ENCODE measurements at regions of chr12 and their contacts with region 1.

Region 1: GRCh38 chr12:21677622-21678277 is 20.1 kb upstream of the LDHB start:
- DNase-seq: no peak
- H3K4me3 ChIP-seq: no peak overlapping the region
- H3K27ac ChIP-seq: no peak overlapping the region
- H3K27me3 ChIP-seq: peaks cover 7% of the 10 kb centered on the region
- CTCF ChIP-seq: no peak

Region 2: DNA sequence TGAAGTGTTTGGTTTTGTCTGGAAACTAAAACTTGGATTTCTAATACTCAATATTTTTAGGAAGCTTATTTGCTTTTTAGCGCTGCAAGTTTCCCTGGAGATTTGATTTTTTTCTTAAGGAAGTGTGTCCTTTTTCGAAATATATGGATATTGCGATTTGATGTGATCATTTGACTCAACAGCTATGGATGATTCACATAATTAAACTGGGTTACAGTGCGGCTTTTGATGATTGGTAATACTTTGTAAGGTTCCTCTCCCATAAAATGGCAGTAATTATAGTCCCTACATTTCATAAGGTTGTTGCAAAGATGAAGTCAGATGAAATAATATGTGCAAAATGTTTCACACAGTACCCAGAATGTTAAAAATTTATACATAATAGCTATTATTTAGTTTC is 33.2 kb before region 1 on chr12:
- CTCF ChIA-PET with region 1: interaction called, 12 read pairs
- POLR2A ChIA-PET with region 1: no interaction called
- DNase-seq: no peak
- H3K4me3 ChIP-seq: no peak overlapping the region
- H3K27ac ChIP-seq: no peak overlapping the region
- H3K27me3 ChIP-seq: no peaks in the 10 kb centered on the region
- CTCF ChIP-seq: no peak

Region 3: DNA sequence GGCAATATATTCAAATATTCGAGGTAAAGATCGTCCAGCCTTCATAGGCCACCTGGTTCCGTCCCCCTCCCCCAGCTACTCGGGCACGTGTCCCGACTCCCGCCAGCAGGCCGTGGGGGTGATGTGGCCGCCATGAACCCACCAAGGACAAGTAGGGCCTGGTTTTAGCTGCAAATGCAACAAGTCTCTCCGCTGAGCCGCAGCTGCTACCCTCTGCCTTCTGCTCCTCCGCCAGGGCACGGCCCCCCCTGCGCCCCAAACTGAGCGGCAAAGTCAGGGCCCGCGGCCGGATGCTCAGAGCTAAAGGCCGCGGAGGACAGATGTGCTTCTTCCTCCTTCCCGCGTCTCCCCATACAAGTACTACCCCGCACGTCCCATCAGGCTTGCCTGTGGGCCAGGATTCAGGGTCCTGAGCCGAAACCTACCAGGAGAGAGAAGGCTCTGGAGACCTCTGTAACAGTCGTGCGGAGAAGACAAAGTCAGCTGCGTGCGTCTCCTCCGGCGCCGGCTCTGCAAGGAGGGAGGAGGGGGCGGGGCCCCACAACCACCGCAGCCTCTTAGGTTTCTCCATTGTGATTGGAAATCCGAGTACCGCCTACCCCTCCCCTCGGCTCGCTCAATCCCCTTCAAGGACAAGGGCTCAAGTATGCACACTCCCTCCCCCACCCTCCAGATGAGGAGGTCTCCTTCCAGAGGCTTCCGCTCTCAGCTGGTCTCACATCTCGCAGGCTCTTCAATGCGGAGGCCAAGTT is 20.2 kb before region 1 on chr12 and contains the start of gene LDHB:
- CTCF ChIA-PET with region 1: interaction called, 25 read pairs
- POLR2A ChIA-PET with region 1: interaction called, 3 read pairs
- DNase-seq: peak; percentile 88
- H3K4me3 ChIP-seq: peak within 1 kb of the TSS; percentile 93
- H3K27ac ChIP-seq: peak within 1 kb of the TSS; percentile 92
- H3K27me3 ChIP-seq: no peaks in the 10 kb centered on the region
- CTCF ChIP-seq: no peak
- polyA plus RNA-seq, gene LDHB: 894 and 1,189 TPM in 2 replicates

Region 4: GRCh38 chr12:21697904-21698630 is 20.3 kb after region 1 on chr12:
- CTCF ChIA-PET with region 1: interaction called, 39 read pairs
- POLR2A ChIA-PET with region 1: no interaction called
- DNase-seq: peak; percentile 11
- H3K4me3 ChIP-seq: no peak overlapping the region
- H3K27ac ChIP-seq: no peak overlapping the region
- H3K27me3 ChIP-seq: no peaks in the 10 kb centered on the region
- CTCF ChIP-seq: peak; percentile 60

Region 5: DNA sequence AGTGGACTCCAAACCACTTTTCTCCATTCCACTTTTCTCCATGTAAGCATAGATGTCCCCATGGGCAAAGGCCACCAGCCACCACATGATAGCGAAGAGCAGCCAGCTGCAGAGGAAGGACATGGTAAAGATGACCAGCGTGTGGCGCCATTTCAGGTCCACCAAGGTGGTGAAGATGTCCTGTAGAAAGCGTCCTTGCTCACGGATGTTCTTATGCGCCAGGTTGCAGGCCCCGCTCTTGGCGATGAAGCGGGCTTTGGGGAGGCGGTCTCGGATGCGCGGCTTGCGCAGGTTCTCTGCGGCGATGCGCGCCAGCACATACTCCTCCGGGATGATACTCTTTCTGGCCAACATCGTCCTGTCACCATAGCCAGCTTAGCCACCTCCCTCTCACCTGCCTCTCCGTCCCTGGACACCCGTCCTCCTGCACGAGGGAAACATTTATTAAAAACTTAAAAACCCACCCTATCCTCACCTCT is 95.6 kb after region 1 on chr12:
- CTCF ChIA-PET with region 1: no interaction called
- POLR2A ChIA-PET with region 1: no interaction called
- DNase-seq: no peak
- H3K4me3 ChIP-seq: peak overlapping the region; percentile 72
- H3K27ac ChIP-seq: no peak overlapping the region
- H3K27me3 ChIP-seq: no peaks in the 10 kb centered on the region
- CTCF ChIP-seq: peak; percentile 48

Region 6: DNA sequence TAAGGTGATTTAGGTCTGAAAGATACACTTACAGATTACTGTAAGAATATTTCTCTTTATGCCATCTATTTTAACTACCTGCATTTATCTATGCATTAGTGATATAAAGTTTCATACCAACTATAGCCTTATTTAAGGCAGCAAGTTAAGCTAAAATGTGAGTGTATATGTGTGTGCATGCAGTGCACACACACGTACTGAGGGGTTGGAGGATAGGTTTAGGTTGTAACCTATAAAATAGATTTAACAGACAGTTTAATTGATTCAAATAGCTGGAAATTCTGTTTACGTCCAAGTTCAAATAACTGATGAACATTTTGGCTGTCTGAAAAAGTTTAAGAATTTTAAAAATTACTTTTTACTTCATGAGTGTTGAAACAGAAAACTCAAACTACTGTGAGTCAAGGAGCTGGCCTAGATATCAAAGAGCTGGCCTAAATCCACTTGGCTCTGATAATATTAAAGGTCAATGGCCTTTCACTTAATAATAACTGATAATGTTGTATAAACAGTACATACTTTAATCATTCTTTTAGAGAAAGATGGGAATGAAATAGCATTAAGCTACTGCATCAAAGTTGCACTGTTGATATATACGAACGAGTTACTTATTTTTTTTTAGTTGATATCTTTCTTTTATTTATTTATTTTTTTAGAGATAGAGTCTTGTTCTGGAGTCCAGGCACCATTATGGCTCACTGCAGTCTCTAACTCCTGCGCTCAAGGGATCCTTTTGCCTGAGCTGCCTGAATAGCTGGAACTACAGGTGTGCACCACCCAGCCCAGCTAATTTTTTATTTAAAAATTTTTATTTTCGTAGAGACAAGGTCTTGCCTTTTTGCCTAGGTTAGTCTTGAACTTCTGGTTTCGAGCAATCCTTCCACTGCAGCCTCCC is 110.6 kb after region 1 on chr12:
- CTCF ChIA-PET with region 1: no interaction called
- POLR2A ChIA-PET with region 1: no interaction called
- DNase-seq: no peak
- H3K4me3 ChIP-seq: no peak overlapping the region
- H3K27ac ChIP-seq: no peak overlapping the region
- H3K27me3 ChIP-seq: no peaks in the 10 kb centered on the region
- CTCF ChIP-seq: no peak

Measured in AG04450 (cell line).